ENCODE measurements at regions of chr11 and their contacts with region 1.

Region 1: GRCh38 chr11:126989942-126990715 is 10.4 kb downstream of the KIRREL3 start:
- DNase-seq: peak; percentile 67
- H3K4me3 ChIP-seq: no peak overlapping the region
- H3K27ac ChIP-seq: no peak overlapping the region
- H3K4me1 ChIP-seq: no peaks in the 10 kb centered on the region
- H3K27me3 ChIP-seq: no peaks in the 10 kb centered on the region
- CTCF ChIP-seq: peak; percentile 88

Region 2: DNA sequence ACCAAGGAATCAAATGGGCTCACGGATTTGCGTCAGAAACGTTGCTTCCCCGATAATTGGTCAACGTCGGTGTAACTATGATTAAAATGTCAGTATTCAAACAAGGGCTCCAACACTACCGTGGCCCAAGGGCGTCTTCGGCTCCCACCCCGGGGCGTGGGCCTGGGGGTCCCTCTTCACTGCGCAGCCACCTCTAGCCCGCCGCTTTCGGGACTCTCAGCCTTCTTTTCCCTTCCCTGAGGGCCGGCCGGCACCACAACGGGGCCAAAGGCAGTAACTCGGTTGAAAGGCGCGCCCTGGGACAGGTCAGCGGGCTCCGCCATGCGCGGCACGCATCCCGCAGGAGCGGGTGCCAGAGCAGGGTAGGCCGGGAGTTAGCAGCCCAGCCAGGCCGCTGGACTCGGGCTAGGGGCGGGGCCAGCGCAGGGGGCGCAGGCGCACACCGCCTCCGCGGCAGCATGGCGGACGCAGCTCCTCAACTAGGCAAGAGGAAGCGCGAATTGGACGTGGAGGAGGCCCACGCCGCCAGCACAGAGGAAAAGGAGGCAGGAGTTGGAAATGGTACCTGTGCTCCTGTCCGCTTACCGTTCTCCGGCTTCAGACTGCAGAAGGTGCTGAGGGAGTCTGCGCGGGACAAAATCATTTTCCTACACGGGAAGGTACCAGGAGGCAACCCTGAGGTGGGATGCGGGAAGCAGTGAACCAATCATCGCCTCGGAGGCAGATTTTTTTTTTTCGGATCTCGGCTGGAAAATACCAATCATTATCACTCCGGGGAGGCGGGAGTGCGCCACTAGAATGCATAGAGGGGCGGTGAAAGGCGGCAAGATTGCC is 686.3 kb before region 1 on chr11 and contains the start of gene DCPS:
- intact Hi-C with region 1: loop called (anchors 10 kb)
- DNase-seq: peak; percentile 91
- H3K4me3 ChIP-seq: peak within 1 kb of the TSS; percentile 56
- H3K27ac ChIP-seq: peak within 1 kb of the TSS; percentile 81
- H3K4me1 ChIP-seq: peaks cover 5% of the 10 kb centered on the region
- H3K27me3 ChIP-seq: no peaks in the 10 kb centered on the region
- CTCF ChIP-seq: no peak
- total RNA-seq, gene DCPS: 17.2 to 31.1 TPM

Region 3: DNA sequence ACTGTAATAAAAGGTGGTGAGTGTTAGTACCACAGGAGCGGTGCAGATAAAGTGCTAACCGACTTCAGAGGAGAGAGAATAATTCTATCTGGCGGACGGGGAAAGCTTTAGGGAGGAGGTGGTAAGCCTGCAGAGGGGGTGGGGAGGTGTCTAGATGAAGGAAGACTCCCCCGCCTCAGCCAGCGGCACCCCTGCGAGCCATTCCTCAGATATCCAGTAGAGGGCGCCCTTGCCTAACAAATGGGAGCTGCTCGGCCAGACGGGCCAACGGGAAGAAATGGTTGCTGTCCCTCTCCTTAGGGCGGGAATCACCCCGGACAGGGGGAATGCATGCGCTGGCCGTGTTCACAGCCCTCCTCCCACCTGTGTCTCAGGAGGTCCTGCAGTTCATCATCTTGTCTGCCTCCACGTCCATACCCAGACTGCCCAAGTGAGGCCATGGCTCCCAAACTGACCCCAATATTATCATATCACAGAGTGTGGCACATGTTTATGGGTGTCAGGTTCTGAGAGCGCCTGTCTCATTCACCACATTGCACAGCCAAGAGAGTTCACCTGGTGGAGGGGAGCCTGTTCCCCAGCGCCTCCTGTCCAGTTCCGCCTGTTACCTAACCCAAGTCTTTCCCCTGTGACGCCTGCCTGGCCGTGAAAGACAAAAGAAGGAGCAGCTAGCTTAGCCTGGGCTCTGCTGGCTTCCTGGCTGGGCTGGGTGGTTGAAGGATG is 549.2 kb before region 1 on chr11:
- intact Hi-C with region 1: loop called (anchors 5 kb)
- DNase-seq: peak; percentile 82
- H3K4me3 ChIP-seq: no peak overlapping the region
- H3K27ac ChIP-seq: no peak overlapping the region
- H3K4me1 ChIP-seq: no peaks in the 10 kb centered on the region
- H3K27me3 ChIP-seq: no peaks in the 10 kb centered on the region
- CTCF ChIP-seq: peak; percentile 94

Region 4: DNA sequence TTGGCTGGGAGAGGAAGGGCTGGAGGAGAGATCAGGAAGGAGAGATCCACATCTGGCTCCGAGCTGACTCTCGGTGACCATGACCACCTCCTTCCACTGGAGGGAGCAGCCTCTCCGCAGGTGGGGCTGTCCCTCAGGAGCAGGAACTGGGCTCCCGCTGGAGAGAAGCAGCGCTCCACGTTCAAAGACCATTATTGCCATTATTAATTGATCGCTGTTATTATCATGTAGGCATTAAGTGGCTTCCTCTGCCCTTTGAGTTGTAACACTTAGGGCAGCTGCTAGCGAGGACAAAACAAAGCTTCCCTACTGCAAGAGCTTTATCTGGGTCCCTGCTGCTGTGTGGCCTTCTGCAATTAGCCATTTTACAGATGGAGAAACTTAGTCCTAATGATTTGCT is 382.8 kb before region 1 on chr11:
- intact Hi-C with region 1: loop called (anchors 5 kb)
- DNase-seq: peak; percentile 25
- H3K4me3 ChIP-seq: no peak overlapping the region
- H3K27ac ChIP-seq: no peak overlapping the region
- H3K4me1 ChIP-seq: no peaks in the 10 kb centered on the region
- H3K27me3 ChIP-seq: no peaks in the 10 kb centered on the region
- CTCF ChIP-seq: peak; percentile 46

Region 5: DNA sequence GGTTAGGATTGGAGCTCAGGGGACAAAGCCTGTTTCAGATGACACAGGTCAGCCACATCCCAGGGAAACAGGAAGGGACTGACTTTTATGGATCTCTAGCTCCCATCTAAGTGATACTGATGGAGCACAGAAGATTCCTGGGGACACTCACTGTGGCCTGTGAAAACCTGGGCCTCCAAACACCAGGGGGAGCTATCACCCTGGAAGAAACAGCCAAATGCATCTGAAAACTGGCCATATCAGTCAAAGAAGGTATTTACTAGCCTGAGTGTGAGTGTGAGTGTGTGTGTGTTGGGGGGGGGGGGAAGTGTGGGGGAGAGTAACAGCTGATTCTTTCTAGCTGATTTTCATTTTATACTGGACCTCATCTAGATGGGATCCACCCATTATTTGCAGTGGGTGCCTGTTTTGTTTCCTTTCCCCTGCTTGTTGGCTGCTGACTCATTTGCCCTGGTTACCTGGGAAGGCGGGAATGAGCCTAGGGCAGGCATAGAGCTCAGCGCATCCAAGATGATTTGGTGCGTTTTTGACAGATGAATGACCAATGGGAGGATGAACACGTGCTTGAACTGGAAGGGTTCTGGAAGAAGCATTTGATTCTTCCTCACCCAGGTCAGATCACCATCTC is 273.6 kb before region 1 on chr11:
- intact Hi-C with region 1: loop called (anchors 2 kb)
- DNase-seq: peak; percentile 51
- H3K4me3 ChIP-seq: no peak overlapping the region
- H3K27ac ChIP-seq: no peak overlapping the region
- H3K4me1 ChIP-seq: no peaks in the 10 kb centered on the region
- H3K27me3 ChIP-seq: no peaks in the 10 kb centered on the region
- CTCF ChIP-seq: peak; percentile 47

Region 6: DNA sequence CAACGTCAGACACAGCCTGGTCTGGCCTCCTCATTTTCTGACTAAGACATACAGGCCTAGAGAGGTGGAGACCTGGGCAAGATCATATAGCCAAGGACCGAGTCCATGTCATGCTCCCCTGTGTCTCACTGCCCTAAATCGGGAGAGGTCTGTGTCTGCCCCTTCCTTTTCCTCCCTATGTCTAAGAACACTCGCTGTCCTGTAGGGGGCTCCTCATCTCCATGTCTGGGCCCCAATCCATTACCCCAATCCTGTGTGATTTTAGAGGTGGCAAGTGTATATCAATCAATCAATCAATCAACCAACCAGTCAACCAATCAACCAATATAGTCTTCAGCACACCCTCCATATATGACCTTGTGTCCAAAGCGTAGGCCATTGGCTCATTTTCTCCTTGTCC is 115.3 kb before region 1 on chr11:
- intact Hi-C with region 1: loop called (anchors 10 kb)
- DNase-seq: no peak
- H3K4me3 ChIP-seq: no peak overlapping the region
- H3K27ac ChIP-seq: no peak overlapping the region
- H3K4me1 ChIP-seq: no peaks in the 10 kb centered on the region
- H3K27me3 ChIP-seq: no peaks in the 10 kb centered on the region
- CTCF ChIP-seq: no peak

Measured in colonic mucosa (tissue), 4 donors.